Heart right ventricle (tissue), 16 donors: ENCODE measurements at regions of chr22 and their contacts with region 1.

Region 1: GRCh38 chr22:40009292-40009769 is 14.6 kb downstream of the FAM83F start:
- DNase-seq: no peak
- ATAC-seq: peak in 1 of 8 donors; percentile 44
- H3K4me3 ChIP-seq: no peak overlapping the region
- H3K27ac ChIP-seq: no peak overlapping the region
- H3K4me1 ChIP-seq: peaks cover 0 to 20% (median 0%) of the 10 kb centered on the region in 9 donors
- H3K27me3 ChIP-seq: peaks cover 0 to 55% (median 42%) of the 10 kb centered on the region in 7 donors
- CTCF ChIP-seq: no peak

Region 2: GRCh38 chr22:39559454-39560105 is 449.8 kb before region 1 on chr22:
- intact Hi-C with region 1: loop called in 1 of 10 experiments (anchors 5 kb)
- DNase-seq: no peak
- ATAC-seq: peak in 3 of 8 donors; percentile 14 to 47 (median 33)
- H3K4me3 ChIP-seq: no peak overlapping the region
- H3K27ac ChIP-seq: no peak overlapping the region
- H3K4me1 ChIP-seq: peaks cover 0 to 8% (median 3%) of the 10 kb centered on the region in 9 donors
- H3K27me3 ChIP-seq: peaks cover 12 to 78% (median 63%) of the 10 kb centered on the region in 7 donors
- CTCF ChIP-seq: peak in 8 of 9 donors; percentile 14 to 45 (median 36)

Region 3: GRCh38 chr22:39946503-39947219 is 62.7 kb before region 1 on chr22:
- intact Hi-C with region 1: loop called in 1 of 10 experiments (anchors 10 kb)
- DNase-seq: no peak
- ATAC-seq: no peak
- H3K4me3 ChIP-seq: no peak overlapping the region
- H3K27ac ChIP-seq: no peak overlapping the region
- H3K4me1 ChIP-seq: peaks cover 0 to 18% (median 0%) of the 10 kb centered on the region in 9 donors
- H3K27me3 ChIP-seq: peaks cover 0 to 5% (median 0%) of the 10 kb centered on the region in 7 donors
- CTCF ChIP-seq: no peak

Region 4: DNA sequence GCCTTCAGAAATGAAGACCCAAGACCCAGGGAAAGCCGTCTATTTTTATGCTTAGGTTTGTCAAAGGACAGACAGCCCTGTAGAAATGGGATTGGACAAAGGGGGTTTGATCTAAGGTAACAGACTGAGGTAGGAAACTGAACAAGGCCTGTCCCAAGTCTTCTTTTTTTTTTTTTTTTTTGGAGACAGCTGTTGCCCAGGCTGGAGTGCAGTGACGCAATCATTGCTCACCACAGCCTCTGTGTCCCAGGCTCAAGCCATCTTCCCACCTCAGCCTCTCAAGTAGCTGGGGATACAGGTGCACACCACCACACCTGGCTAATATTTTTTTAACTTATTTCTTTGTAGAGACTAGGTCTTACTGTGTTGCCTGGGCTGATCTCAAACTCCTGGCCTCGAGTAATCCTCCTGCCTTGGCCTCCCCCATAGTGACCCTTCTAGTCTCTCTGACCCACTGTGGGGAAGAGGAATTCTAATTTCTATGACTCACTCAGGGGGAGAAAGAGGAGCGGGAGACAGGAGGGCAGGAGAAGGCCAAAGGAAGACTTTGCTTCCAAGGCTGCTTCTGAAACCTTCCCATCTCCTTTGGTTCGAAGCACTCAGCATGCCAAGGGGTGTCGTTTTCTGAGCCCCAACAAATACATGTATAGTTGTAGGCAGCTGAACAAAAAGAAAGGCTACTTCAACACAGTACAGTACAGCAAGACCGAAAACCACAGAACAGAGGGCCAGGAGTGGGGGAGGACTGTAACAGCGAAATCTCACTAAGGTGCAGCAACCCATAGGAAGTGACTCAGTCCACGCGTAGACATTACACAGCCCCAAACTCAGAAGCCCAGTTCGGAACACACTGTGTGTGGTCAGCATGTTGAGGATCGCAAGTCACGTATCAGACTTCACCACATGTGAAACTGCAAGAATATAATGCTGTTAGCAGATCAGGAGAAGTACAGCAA is 48.3 kb before region 1 on chr22:
- intact Hi-C with region 1: no loop called
- DNase-seq: no peak
- ATAC-seq: peak in 2 of 8 donors; percentile 38 to 57
- H3K4me3 ChIP-seq: no peak overlapping the region
- H3K27ac ChIP-seq: peak overlapping the region in 1 of 10 donors; percentile 75
- H3K4me1 ChIP-seq: peaks cover 0 to 55% (median 0%) of the 10 kb centered on the region in 9 donors
- H3K27me3 ChIP-seq: peaks cover 0 to 25% (median 0%) of the 10 kb centered on the region in 7 donors
- CTCF ChIP-seq: no peak